ENCODE measurements at regions of chr4 and their contacts with region 1.

Region 1: GRCh38 chr4:76758290-76758882 is 139.6 kb downstream of the SOWAHB start:
- DNase-seq: peak; percentile 14
- H3K4me3 ChIP-seq: no peak overlapping the region
- H3K27ac ChIP-seq: no peak overlapping the region
- H3K4me1 ChIP-seq: no peaks in the 10 kb centered on the region
- CTCF ChIP-seq: peak; percentile 89

Region 2: GRCh38 chr4:76511947-76512346 is 246.4 kb before region 1 on chr4:
- CTCF ChIA-PET with region 1: no interaction called
- POLR2A ChIA-PET with region 1: no interaction called
- intact Hi-C with region 1: loop called (anchors 5 kb)
- DNase-seq: no peak
- H3K4me3 ChIP-seq: no peak overlapping the region
- H3K27ac ChIP-seq: no peak overlapping the region
- H3K4me1 ChIP-seq: no peaks in the 10 kb centered on the region
- CTCF ChIP-seq: no peak

Measured in OCI-LY7 (cell line).